ENCODE measurements at regions of chr15 and their contacts with region 1.

Region 1: GRCh38 chr15:29925227-29926082 is 103.2 kb upstream of the TJP1 start:
- DNase-seq: peak; percentile 57
- ATAC-seq: peak; percentile 95
- H3K4me3 ChIP-seq: no peak overlapping the region
- H3K27ac ChIP-seq: no peak overlapping the region
- H3K4me1 ChIP-seq: peaks cover 26% of the 10 kb centered on the region
- H3K27me3 ChIP-seq: no peaks in the 10 kb centered on the region
- CTCF ChIP-seq: peak; percentile 81
- EP300 ChIP-seq: no peak
- POLR2A ChIP-seq: no peak
- RAD21 ChIP-seq: peak; percentile 71

Region 2: DNA sequence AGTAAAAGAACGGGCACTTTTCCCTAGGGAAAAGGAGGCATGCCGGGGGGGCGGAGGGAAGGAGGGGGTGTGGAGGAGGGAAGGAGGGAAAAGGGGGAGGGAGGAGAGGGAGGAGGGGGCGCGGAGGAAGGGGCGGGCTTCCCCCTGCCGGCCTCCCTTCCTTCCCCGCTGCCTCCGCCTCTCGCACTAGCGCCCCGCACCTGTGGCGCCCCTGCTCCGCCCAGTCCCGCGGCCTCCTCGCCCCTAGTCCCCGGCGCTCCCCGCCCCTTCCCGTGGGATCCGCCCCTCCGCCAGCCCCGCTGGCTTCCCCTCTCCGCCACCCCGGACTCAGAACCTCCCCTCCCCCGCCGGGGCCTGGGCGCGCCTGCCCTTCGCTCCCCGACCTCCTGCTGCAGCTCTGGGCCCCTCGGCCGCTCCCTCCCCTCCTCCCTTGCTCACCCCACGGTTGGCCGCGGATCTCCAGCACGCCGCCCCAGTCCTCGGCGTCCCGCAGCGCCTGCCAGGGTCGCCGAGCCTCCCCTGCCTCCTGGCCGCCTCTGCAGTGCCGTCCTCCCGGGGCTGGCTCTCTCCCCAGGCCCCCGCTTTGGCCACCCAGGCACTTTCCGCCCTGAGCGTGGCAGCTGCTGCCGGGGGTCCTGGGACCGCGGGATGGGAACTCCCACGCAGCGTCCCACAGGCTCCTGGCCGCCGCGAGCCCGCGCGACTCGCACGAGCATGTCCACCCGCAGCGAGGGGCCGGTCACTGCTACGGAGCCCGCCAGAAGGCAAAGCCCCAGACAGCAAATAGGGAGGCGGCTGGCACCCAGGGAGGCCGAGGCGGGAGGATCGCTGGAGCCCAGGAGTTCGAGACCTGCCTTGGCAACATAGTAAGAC is 250.6 kb before region 1 on chr15:
- CTCF ChIA-PET with region 1: no interaction called
- POLR2A ChIA-PET with region 1: no interaction called
- in situ Hi-C with region 1: loop called (anchors 5 kb)
- intact Hi-C with region 1: no loop called
- DNase-seq: peak; percentile 46
- ATAC-seq: peak; percentile 87
- H3K4me3 ChIP-seq: peak overlapping the region; percentile 37 to 74 (median 63); a peak in 4 of 6 replicates
- H3K27ac ChIP-seq: no peak overlapping the region
- H3K4me1 ChIP-seq: peaks cover 26% of the 10 kb centered on the region
- H3K27me3 ChIP-seq: peaks cover 0 to 3% of the 10 kb centered on the region in 2 experiments; a peak in 2 of 5 replicates
- CTCF ChIP-seq: no peak
- EP300 ChIP-seq: no peak
- POLR2A ChIP-seq: no peak
- RAD21 ChIP-seq: no peak

Region 3: DNA sequence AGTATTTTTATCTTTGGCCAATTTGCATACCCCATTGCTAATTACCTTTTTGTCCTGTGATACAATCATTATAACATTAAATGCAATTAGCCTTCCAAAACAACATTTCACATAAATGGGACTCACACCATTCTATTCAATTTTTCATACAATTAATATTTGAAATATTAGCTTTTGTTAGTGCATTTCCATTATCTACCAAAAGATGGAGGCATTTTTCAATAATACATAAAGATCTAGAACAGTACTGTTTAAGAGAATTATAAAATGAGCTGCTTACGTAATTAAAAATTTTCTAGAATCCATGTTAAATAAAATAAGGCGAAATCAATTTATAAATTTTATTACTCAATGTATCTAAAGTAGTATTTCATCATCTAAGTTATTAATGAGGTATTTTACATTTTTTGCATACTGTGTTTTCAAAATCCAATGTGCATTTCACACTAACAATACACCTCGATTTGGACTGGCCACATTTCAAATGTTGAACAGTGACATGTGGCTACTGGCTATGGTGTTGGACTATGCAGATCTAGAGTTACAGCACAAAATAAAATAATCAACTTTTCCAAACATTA is 177.5 kb before region 1 on chr15:
- CTCF ChIA-PET with region 1: interaction called, 9 read pairs
- POLR2A ChIA-PET with region 1: no interaction called
- in situ Hi-C with region 1: loop called (anchors 5 kb)
- intact Hi-C with region 1: no loop called
- DNase-seq: peak; percentile 3
- ATAC-seq: no peak
- H3K4me3 ChIP-seq: no peak overlapping the region
- H3K27ac ChIP-seq: no peak overlapping the region
- H3K4me1 ChIP-seq: no peaks in the 10 kb centered on the region
- H3K27me3 ChIP-seq: no peaks in the 10 kb centered on the region
- CTCF ChIP-seq: no peak
- EP300 ChIP-seq: no peak
- POLR2A ChIP-seq: no peak
- RAD21 ChIP-seq: no peak

Region 4: GRCh38 chr15:29821416-29822131 is 103.9 kb before region 1 on chr15:
- CTCF ChIA-PET with region 1: no interaction called
- POLR2A ChIA-PET with region 1: interaction called, 11 read pairs
- in situ Hi-C with region 1: no loop called
- intact Hi-C with region 1: loop called (anchors 5 kb)
- DNase-seq: peak; percentile 74
- ATAC-seq: peak; percentile 73
- H3K4me3 ChIP-seq: peak overlapping the region; percentile 84 to 90 (median 87)
- H3K27ac ChIP-seq: peak overlapping the region; percentile 98
- H3K4me1 ChIP-seq: peaks cover 37% of the 10 kb centered on the region
- H3K27me3 ChIP-seq: peaks cover 0 to 1% of the 10 kb centered on the region in 2 experiments; a peak in 1 of 5 replicates
- CTCF ChIP-seq: 0 out of 2 replicates have a peak, but pooled peaks have one; percentile 15
- EP300 ChIP-seq: no peak
- POLR2A ChIP-seq: peak; percentile 39 to 76; a peak in 3 of 4 replicates
- RAD21 ChIP-seq: no peak

Region 5: DNA sequence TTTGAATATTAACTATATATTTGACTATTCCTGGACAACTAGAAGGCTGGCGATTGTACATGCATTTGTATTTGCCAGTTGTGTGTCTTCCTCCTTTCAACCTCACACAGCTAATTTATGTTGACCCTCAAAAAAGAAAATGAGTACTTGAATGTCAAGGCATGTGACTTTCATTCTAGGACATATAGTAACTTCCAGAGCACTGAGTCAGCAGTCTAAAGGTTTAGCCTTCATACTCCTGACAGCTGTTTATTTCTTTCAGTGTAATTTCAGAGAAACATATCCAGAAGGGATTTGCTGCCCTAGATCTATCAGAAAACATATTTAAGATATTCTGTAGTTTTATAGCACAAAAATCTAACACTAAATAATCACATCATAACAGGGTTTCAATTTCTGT is 82.7 kb after region 1 on chr15:
- CTCF ChIA-PET with region 1: no interaction called
- POLR2A ChIA-PET with region 1: no interaction called
- in situ Hi-C with region 1: no loop called
- intact Hi-C with region 1: no loop called
- DNase-seq: no peak
- ATAC-seq: no peak
- H3K4me3 ChIP-seq: no peak overlapping the region
- H3K27ac ChIP-seq: no peak overlapping the region
- H3K4me1 ChIP-seq: no peaks in the 10 kb centered on the region
- H3K27me3 ChIP-seq: 0 out of 5 replicates have a peak, but pooled peaks cover 0 to 3% of the 10 kb centered on the region in 2 experiments
- CTCF ChIP-seq: no peak
- EP300 ChIP-seq: no peak
- POLR2A ChIP-seq: no peak
- RAD21 ChIP-seq: no peak

Measured in HepG2 (cell line).